Prostate gland (tissue), 2 donors: ENCODE measurements at regions of chr3 and their contacts with region 1.

Region 1: GRCh38 chr3:160169139-160169976 is 55.9 kb upstream of the C3orf80 start:
- DNase-seq: no peak
- H3K4me3 ChIP-seq: no peak overlapping the region
- H3K27ac ChIP-seq: no peak overlapping the region
- H3K4me1 ChIP-seq: no peaks in the 10 kb centered on the region
- H3K27me3 ChIP-seq: no peaks in the 10 kb centered on the region
- CTCF ChIP-seq: no peak
- POLR2A ChIP-seq: no peak

Region 2: GRCh38 chr3:159751146-159751545 is 418.2 kb before region 1 on chr3:
- intact Hi-C with region 1: no loop called
- DNase-seq: no peak
- H3K4me3 ChIP-seq: no peak overlapping the region
- H3K27ac ChIP-seq: no peak overlapping the region
- H3K4me1 ChIP-seq: no peaks in the 10 kb centered on the region
- H3K27me3 ChIP-seq: no peaks in the 10 kb centered on the region
- CTCF ChIP-seq: no peak
- POLR2A ChIP-seq: no peak

Region 3: GRCh38 chr3:160343132-160343531 is 173.8 kb after region 1 on chr3:
- intact Hi-C with region 1: loop called (anchors 5 kb)
- DNase-seq: no peak
- H3K4me3 ChIP-seq: no peak overlapping the region
- H3K27ac ChIP-seq: no peak overlapping the region
- H3K4me1 ChIP-seq: no peaks in the 10 kb centered on the region
- H3K27me3 ChIP-seq: no peaks in the 10 kb centered on the region
- CTCF ChIP-seq: peak in 3 of 4 experiments; percentile 37 to 49 (median 41)
- POLR2A ChIP-seq: no peak

Region 4: GRCh38 chr3:160413613-160414248 is 244.4 kb after region 1 on chr3:
- intact Hi-C with region 1: loop called (anchors 5 kb)
- DNase-seq: peak; percentile 17
- H3K4me3 ChIP-seq: no peak overlapping the region
- H3K27ac ChIP-seq: no peak overlapping the region
- H3K4me1 ChIP-seq: no peaks in the 10 kb centered on the region
- H3K27me3 ChIP-seq: no peaks in the 10 kb centered on the region
- CTCF ChIP-seq: peak; percentile 42 to 74 (median 67)
- POLR2A ChIP-seq: no peak